T-cell (primary cell): ENCODE measurements at regions of chr17 and their contacts with region 1.

Region 1: DNA sequence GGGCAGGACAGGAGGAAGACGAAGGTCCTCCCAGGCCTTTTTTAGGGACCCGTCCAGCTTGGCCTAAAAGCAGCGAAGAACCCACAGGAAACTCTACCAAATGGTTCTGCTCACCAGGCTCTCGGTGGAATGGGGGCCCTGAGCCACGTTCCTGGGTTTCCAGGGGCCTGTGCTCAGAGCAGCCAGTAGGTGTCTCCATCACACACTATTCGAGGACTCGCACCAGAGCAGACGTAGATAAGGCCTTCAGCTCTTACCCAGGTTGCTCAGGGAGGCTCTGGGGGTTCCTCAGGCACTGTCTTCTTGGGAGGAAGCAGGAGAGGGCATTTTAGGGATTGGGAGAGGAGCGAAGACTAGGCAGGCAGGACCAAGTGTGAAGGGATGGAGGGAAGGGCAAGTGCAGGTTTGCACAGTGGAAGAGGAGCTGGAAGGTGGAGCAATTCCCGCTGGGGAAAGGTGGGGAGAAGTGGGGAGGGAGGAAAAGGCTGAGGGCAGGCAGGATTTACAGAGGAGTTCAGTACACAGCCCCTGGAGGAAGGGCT is 157.1 kb downstream of the RGS9 start:
- DNase-seq: peak; percentile 12 to 75 (median 46)
- ATAC-seq: peak; percentile 84 to 92 (median 86)
- H3K4me3 ChIP-seq: no peak overlapping the region
- H3K4me3 Mint-ChIP-seq: no peak overlapping the region
- H3K27ac ChIP-seq: no peak overlapping the region
- H3K27ac Mint-ChIP-seq: no peak overlapping the region
- H3K4me1 ChIP-seq: peaks cover 0 to 5% of the 10 kb centered on the region in 2 experiments
- H3K4me1 Mint-ChIP-seq: peaks cover 4 to 8% (median 5%) of the 10 kb centered on the region in 3 donors
- H3K27me3 ChIP-seq: peaks cover 0 to 3% of the 10 kb centered on the region in 2 experiments
- H3K27me3 Mint-ChIP-seq: peaks cover 3 to 5% of the 10 kb centered on the region in 2 donors

Region 2: GRCh38 chr17:65254168-65254567 is 40.1 kb before region 1 on chr17:
- CTCF ChIA-PET with region 1: no interaction called
- POLR2A ChIA-PET with region 1: no interaction called
- DNase-seq: no peak
- ATAC-seq: no peak
- H3K4me3 ChIP-seq: no peak overlapping the region
- H3K4me3 Mint-ChIP-seq: no peak overlapping the region
- H3K27ac ChIP-seq: no peak overlapping the region
- H3K27ac Mint-ChIP-seq: no peak overlapping the region
- H3K4me1 ChIP-seq: no peaks in the 10 kb centered on the region
- H3K4me1 Mint-ChIP-seq: no peaks in the 10 kb centered on the region
- H3K27me3 ChIP-seq: peaks cover 3 to 8% of the 10 kb centered on the region in 2 experiments
- H3K27me3 Mint-ChIP-seq: peaks cover 19 to 39% of the 10 kb centered on the region in 2 donors

Region 3: GRCh38 chr17:65355246-65355645 is 61.0 kb after region 1 on chr17:
- CTCF ChIA-PET with region 1: no interaction called
- POLR2A ChIA-PET with region 1: no interaction called
- DNase-seq: no peak
- ATAC-seq: no peak
- H3K4me3 ChIP-seq: no peak overlapping the region
- H3K4me3 Mint-ChIP-seq: no peak overlapping the region
- H3K27ac ChIP-seq: no peak overlapping the region
- H3K27ac Mint-ChIP-seq: no peak overlapping the region
- H3K4me1 ChIP-seq: no peaks in the 10 kb centered on the region
- H3K4me1 Mint-ChIP-seq: no peaks in the 10 kb centered on the region
- H3K27me3 ChIP-seq: peaks cover 0 to 9% of the 10 kb centered on the region in 2 experiments
- H3K27me3 Mint-ChIP-seq: peaks cover 5 to 6% of the 10 kb centered on the region in 2 donors

Region 4: DNA sequence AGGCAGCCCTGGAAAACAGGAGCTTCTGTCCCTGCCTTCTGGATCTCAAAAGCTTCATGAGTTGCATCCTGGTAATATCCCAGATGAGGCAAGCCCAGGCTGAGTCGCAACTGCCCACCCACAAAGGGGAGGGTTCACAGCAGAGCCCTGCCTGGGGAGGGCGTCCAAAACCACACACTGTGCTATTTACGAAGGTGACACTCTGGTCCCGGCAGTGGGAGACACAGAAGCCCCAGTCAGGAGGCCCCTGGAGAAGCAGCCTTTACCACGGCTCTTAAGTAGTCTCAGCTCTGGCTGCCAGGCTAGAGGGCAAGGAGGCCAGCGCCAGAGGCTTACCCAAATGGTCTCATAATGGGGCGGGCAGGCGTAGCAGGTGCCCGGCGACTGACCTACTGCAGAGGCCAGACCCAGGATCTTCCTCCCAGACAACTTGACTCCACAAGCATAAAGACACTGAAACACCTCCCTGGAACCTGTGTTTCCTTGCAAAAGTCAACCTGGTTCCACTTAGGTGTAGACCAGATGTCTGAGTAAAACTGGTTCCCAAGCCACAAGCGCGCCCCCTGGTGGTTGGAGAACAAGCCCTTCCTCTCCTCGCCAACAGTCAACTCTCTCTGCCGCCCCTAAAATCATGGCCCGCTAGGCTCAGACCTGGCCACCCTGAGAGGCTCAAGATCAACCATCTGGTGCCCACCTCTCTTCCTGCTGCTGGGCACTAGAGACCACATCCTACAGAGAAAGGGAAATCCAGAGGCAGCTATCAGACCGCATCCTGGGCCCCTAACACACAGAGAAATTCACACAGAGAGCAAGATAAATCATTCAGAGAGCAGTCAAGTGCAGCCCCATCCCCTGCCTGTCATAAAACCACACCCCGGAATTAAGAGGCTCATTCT is 262.0 kb after region 1 on chr17:
- CTCF ChIA-PET with region 1: interaction called in 1 of 2 experiments, 10 read pairs
- POLR2A ChIA-PET with region 1: no interaction called
- DNase-seq: peak; percentile 73 to 97 (median 89)
- ATAC-seq: peak; percentile 38 to 47 (median 38)
- H3K4me3 ChIP-seq: peak overlapping the region; percentile 27 to 52
- H3K4me3 Mint-ChIP-seq: no peak overlapping the region
- H3K27ac ChIP-seq: peak overlapping the region; percentile 48
- H3K27ac Mint-ChIP-seq: no peak overlapping the region
- H3K4me1 ChIP-seq: peaks cover 15 to 22% of the 10 kb centered on the region in 2 experiments
- H3K4me1 Mint-ChIP-seq: peaks cover 8 to 25% (median 18%) of the 10 kb centered on the region in 3 donors
- H3K27me3 ChIP-seq: peaks cover 0 to 13% of the 10 kb centered on the region in 2 experiments
- H3K27me3 Mint-ChIP-seq: peaks cover 0 to 3% of the 10 kb centered on the region in 2 donors

Region 5: DNA sequence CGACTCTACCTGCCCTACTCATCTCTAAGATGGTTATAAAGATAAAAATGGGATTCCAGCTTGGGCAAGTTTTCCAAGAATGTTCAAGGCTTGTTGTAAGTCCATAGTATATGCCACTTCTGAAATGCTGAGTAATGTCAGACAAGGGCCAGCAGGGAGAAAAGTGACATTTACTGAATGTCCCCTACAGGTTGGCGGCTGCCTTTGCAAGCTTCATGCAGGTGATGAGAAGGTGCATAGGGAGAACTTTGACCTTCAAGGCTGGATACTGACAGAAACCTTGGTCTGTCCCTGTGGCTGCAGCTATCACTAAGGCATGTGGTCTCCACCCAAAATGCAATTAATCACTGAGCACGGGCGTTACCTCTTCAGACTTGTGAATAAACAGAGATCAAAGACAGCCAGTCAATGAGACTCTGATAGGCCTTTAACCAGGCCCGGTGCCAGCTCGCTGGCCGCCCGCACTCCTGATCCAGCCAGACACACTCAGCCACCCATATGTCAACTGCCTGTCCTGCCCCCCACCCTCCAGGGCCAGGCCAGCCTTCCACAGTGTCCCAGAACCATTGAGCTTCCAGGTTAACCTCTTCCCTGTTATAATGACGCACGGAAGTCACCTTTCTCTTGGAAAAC is 294.0 kb after region 1 on chr17:
- CTCF ChIA-PET with region 1: no interaction called
- POLR2A ChIA-PET with region 1: no interaction called
- DNase-seq: no peak
- ATAC-seq: no peak
- H3K4me3 ChIP-seq: no peak overlapping the region
- H3K4me3 Mint-ChIP-seq: peak overlapping the region in 1 of 3 donors; percentile 2
- H3K27ac ChIP-seq: no peak overlapping the region
- H3K27ac Mint-ChIP-seq: no peak overlapping the region
- H3K4me1 ChIP-seq: peaks cover 33 to 44% of the 10 kb centered on the region in 2 experiments
- H3K4me1 Mint-ChIP-seq: peaks cover 36 to 48% (median 48%) of the 10 kb centered on the region in 3 donors
- H3K27me3 ChIP-seq: peaks cover 0 to 12% of the 10 kb centered on the region in 2 experiments
- H3K27me3 Mint-ChIP-seq: peaks cover 0 to 3% of the 10 kb centered on the region in 2 donors

Region 6: DNA sequence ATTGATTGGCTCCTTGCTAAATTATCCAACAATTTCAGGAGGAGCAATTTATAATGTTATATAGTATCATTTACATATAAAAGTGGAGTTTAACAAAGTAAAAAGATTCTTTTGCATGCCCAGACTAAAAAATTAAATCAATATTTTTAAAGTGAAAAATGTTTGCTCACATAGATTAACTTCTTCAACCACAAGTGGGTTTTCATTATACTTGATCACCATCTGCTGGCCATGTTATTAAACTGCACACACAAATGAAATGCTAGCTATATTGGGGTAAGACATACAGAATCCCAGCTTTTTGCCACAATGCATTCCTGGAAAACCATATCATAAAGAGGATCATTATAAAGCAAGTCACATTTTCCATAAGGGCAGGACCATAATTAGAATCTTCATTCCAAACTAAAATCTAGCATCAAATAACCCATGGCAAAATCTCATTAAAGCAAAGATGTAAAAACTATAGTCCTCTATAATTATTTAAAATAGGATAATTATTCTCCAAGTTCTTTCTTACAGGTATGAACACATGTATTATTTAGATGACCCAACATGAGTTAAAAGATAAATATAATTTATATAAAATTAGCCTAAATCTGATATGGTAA is 871.4 kb after region 1 on chr17:
- CTCF ChIA-PET with region 1: interaction called, 4 to 31 read pairs
- POLR2A ChIA-PET with region 1: no interaction called
- DNase-seq: peak in 9 of 35 experiments; percentile 2 to 72 (median 7)
- ATAC-seq: peak in 1 of 4 experiments; percentile 43
- H3K4me3 ChIP-seq: no peak overlapping the region
- H3K4me3 Mint-ChIP-seq: no peak overlapping the region
- H3K27ac ChIP-seq: no peak overlapping the region
- H3K27ac Mint-ChIP-seq: no peak overlapping the region
- H3K4me1 ChIP-seq: no peaks in the 10 kb centered on the region
- H3K4me1 Mint-ChIP-seq: peaks cover 0 to 13% (median 5%) of the 10 kb centered on the region in 3 donors
- H3K27me3 ChIP-seq: no peaks in the 10 kb centered on the region
- H3K27me3 Mint-ChIP-seq: no peaks in the 10 kb centered on the region